Sigmoid colon (tissue), 7 donors: ENCODE measurements at regions of chr20 and their contacts with region 1.

Region 1: GRCh38 chr20:49982346-49983122 is at the start of gene SNAI1:
- DNase-seq: peak; percentile 92
- H3K4me3 ChIP-seq: peak within 1 kb of the TSS; percentile 30 to 56 (median 50)
- H3K27ac ChIP-seq: peak within 1 kb of the TSS; percentile 66 to 83 (median 74)
- H3K4me1 ChIP-seq: peaks cover 3 to 60% (median 57%) of the 10 kb centered on the region in 4 donors
- H3K27me3 ChIP-seq: no peaks in the 10 kb centered on the region
- CTCF ChIP-seq: peak in 2 of 4 experiments; percentile 36 to 45
- EP300 ChIP-seq: no peak
- POLR2A ChIP-seq: peak; percentile 86 to 88
- total RNA-seq, gene SNAI1: 1.1 to 2.6 (median 1.8) TPM

Region 2: DNA sequence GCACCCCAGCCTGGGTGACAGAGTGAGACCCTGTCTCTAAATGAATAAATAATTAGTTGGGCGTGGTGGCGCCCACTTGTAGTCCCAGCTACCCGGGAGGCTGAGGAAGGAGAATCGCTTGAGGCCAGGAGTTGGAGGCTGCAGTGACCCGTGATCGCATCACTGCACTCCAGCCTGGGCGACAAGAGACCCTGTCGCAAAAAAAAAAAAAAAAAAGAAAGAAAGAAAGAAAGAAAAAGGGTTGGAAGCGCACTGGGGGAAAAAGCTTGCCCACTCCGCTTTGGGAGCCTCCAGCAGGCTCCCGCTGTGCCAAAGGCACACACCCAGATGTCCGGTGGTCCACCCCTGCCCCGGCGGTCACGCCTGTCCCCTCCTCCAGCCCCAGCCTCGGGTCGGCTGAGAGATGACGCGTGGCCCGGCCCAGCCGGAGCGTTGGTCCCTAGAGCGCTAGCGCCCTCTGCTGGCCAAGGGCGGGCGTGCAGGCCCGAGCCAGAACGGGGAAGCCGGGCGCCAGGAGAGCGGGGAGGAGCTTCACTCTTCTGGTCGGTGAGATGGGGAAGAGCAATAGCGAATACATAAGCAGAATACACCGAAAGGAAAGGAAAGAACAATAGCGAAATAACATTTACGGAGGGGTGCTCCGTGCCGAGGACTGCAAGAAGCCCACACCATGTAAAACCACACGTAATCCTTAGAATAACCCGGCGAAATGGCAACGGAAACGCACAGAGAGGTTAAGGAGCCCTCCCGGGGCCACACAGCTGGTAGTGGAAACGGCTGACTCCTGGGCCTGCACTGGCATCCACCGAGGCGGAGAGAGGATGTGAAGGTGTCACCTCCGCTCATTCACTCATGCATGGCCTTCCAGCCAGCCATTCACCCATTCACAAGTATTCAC is 88.7 kb after region 1 on chr20:
- intact Hi-C with region 1: loop called (anchors 1 kb)
- DNase-seq: peak; percentile 93
- H3K4me3 ChIP-seq: peak overlapping the region; percentile 3 to 47 (median 32)
- H3K27ac ChIP-seq: peak overlapping the region in 1 of 4 donors; percentile 22
- H3K4me1 ChIP-seq: peaks cover 0 to 24% (median 17%) of the 10 kb centered on the region in 4 donors
- H3K27me3 ChIP-seq: no peaks in the 10 kb centered on the region
- CTCF ChIP-seq: peak; percentile 98 to 100 (median 100)
- EP300 ChIP-seq: no peak
- POLR2A ChIP-seq: no peak